Heart right ventricle (tissue), 16 donors: ENCODE measurements at regions of chr13 and their contacts with region 1.

Region 1: GRCh38 chr13:34124666-34125305 is 306.8 kb downstream of the RFC3 start:
- DNase-seq: no peak
- ATAC-seq: no peak
- H3K4me3 ChIP-seq: no peak overlapping the region
- H3K27ac ChIP-seq: no peak overlapping the region
- H3K4me1 ChIP-seq: no peaks in the 10 kb centered on the region
- H3K27me3 ChIP-seq: no peaks in the 10 kb centered on the region
- CTCF ChIP-seq: no peak

Region 2: GRCh38 chr13:34086281-34086680 is 38.5 kb before region 1 on chr13:
- intact Hi-C with region 1: no loop called
- DNase-seq: no peak
- ATAC-seq: no peak
- H3K4me3 ChIP-seq: no peak overlapping the region
- H3K27ac ChIP-seq: no peak overlapping the region
- H3K4me1 ChIP-seq: no peaks in the 10 kb centered on the region
- H3K27me3 ChIP-seq: no peaks in the 10 kb centered on the region
- CTCF ChIP-seq: no peak

Region 3: GRCh38 chr13:34174671-34175145 is 49.9 kb after region 1 on chr13:
- intact Hi-C with region 1: loop called in 1 of 10 experiments (anchors 5 kb)
- DNase-seq: no peak
- ATAC-seq: no peak
- H3K4me3 ChIP-seq: no peak overlapping the region
- H3K27ac ChIP-seq: no peak overlapping the region
- H3K4me1 ChIP-seq: no peaks in the 10 kb centered on the region
- H3K27me3 ChIP-seq: no peaks in the 10 kb centered on the region
- CTCF ChIP-seq: no peak